OCI-LY7 (cell line): ENCODE measurements at regions of chr5 and their contacts with region 1.

Region 1: DNA sequence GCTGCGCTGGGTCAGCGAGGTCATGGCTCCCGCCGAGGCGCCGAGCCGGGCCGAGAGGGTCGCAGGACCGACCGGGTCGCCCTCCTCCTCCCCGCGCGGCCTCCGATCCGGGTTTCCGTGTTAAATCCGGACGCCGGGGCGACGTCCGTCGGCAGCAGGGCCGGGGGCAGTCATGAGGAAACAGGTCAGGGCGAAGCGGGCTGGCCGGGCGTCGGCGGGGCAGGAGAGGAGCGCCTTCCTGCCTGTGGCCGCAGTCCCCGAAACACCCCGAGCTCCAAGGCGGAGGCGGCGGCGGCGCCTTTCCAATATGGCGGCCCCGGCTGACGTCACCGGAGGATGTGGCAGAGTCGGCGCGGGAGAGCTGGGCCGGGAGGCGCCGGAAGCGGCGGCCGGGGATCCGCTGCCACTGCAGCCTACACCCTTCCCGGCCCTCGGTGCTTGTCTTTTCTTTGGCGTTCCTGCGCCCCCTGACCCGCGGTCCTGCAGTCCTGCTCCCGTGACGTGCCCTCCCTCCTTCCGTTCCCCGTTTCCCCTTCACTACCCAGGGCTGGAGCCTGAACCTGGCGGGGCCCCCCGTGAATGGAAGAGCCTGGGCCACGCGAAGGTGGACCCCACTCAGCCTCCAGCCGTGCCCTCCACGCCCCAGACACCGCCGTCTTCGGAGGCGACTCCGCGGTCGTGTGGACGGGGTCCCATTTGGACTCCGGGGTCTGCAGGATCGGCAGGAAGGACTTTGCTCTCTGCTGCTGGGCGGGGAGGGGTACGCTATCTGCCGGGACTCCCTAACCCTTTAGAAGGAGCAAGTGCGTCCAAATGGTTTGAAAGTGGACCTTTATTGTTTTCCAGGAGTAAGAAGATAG is at the start of gene GOLPH3:
- DNase-seq: peak; percentile 93
- H3K4me3 ChIP-seq: peak within 1 kb of the TSS; percentile 93
- H3K27ac ChIP-seq: peak within 1 kb of the TSS; percentile 75
- H3K4me1 ChIP-seq: peaks cover 27% of the 10 kb centered on the region
- CTCF ChIP-seq: no peak
- total RNA-seq, gene GOLPH3: 25.7 and 35.9 TPM in 2 replicates

Region 2: GRCh38 chr5:32092938-32093812 is 81.1 kb before region 1 on chr5:
- CTCF ChIA-PET with region 1: no interaction called
- POLR2A ChIA-PET with region 1: no interaction called
- intact Hi-C with region 1: no loop called
- DNase-seq: peak; percentile 84
- H3K4me3 ChIP-seq: no peak overlapping the region
- H3K27ac ChIP-seq: no peak overlapping the region
- H3K4me1 ChIP-seq: no peaks in the 10 kb centered on the region
- CTCF ChIP-seq: peak; percentile 90

Region 3: DNA sequence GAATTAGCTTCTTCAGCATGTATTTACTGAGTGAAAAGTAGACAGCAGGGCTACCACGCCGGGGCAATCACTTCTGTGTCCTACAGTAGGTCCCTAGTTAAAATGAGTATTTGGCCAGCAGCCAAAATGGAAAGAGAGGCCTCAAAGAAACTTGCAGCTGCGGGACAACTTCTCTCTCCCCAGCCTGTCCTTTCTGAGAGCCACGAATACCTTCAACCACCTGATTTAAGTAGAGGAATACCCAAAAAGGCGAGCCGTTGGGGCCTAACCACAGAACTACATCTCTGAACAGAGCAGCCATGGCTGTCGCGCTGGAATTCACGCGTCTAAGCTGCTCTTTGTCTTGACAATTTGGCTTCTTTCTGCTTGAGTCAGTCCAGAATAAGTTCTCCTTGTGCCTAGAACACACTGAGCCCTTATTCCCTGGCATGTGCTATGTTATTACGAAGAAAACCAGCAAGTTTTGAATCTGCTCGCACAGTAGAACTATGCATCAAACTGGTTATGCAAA is 43.7 kb after region 1 on chr5:
- CTCF ChIA-PET with region 1: no interaction called
- POLR2A ChIA-PET with region 1: interaction called, 4 read pairs
- intact Hi-C with region 1: loop called (anchors 5 kb)
- DNase-seq: peak; percentile 76
- H3K4me3 ChIP-seq: peak overlapping the region; percentile 12
- H3K27ac ChIP-seq: peak overlapping the region; percentile 63
- H3K4me1 ChIP-seq: peaks cover 14% of the 10 kb centered on the region
- CTCF ChIP-seq: no peak

Region 4: GRCh38 chr5:32444431-32445286 is 270.4 kb after region 1 on chr5 and contains the start of gene ZFR:
- CTCF ChIA-PET with region 1: no interaction called
- POLR2A ChIA-PET with region 1: no interaction called
- intact Hi-C with region 1: loop called (anchors 1 kb)
- DNase-seq: peak; percentile 90
- H3K4me3 ChIP-seq: peak within 1 kb of the TSS; percentile 85
- H3K27ac ChIP-seq: peak within 1 kb of the TSS; percentile 63
- H3K4me1 ChIP-seq: peaks cover 17% of the 10 kb centered on the region
- CTCF ChIP-seq: no peak
- total RNA-seq, gene ZFR: 52.7 and 54.8 TPM in 2 replicates